Left lung (tissue), 14 donors: ENCODE measurements at regions of chr1 and their contacts with region 1.

Region 1: GRCh38 chr1:52296345-52296744 is 69.7 kb downstream of the CC2D1B start:
- DNase-seq: peak in 2 of 4 donors; percentile 12 to 44
- ATAC-seq: peak; percentile 97
- H3K4me3 ChIP-seq: no peak overlapping the region
- H3K27ac ChIP-seq: no peak overlapping the region
- H3K4me1 ChIP-seq: no peaks in the 10 kb centered on the region
- H3K27me3 ChIP-seq: no peaks in the 10 kb centered on the region
- CTCF ChIP-seq: peak; percentile 53 to 59

Region 2: GRCh38 chr1:51648180-51649109 is 647.9 kb before region 1 on chr1:
- intact Hi-C with region 1: no loop called
- DNase-seq: peak in 2 of 4 donors; percentile 57 to 76
- ATAC-seq: peak; percentile 75
- H3K4me3 ChIP-seq: no peak overlapping the region
- H3K27ac ChIP-seq: peak overlapping the region; percentile 21 to 31
- H3K4me1 ChIP-seq: peaks cover 3 to 34% of the 10 kb centered on the region in 2 donors
- H3K27me3 ChIP-seq: no peaks in the 10 kb centered on the region
- CTCF ChIP-seq: no peak

Region 3: DNA sequence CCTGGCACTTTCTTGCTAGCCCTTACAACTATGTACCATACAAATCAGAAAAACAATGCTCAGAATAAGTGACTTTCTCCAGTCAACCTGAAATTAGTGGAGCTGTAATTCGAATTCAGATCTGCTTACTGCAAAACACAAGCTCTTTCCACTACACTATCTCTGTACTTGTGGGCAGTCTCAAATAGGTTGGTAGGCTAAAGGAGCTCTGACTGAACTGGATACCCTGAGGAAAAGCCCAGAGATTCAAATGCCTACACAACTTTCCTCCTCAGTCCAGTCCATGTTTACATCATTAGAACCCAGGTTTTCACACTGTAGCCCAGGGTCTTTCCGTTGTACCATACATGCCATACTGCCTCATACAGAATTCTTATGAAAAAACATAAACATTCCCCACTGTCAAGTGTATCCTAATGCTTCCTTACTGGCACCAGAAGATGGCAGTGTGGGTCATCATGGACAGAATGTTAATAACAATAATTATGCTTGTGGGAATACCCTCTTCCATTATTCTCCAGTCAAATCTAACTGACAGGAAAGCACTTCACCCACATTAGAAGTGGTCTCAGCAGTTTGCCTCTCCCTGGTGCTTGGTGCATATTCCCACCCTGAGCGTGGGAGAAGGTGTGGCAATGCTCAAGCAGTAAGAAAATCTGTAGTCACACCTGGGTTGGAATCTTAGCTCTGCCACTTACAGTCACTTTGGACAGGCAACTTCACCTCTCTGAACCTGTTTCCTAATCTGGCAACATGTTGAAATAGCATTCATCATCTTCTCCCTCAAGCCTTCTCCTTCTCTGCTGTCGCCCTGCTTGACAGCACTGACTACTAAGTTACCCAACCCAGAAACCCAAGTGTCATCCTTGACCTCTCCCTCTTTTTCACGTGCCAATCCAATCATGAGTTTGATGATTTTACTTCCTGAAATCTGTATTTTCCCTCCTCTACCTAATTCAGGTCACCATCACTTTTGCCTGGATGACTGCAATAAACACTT is 168.9 kb before region 1 on chr1:
- intact Hi-C with region 1: loop called in 1 of 2 experiments (anchors 5 kb)
- DNase-seq: peak in 2 of 4 donors; percentile 43 to 78
- ATAC-seq: peak; percentile 96
- H3K4me3 ChIP-seq: no peak overlapping the region
- H3K27ac ChIP-seq: no peak overlapping the region
- H3K4me1 ChIP-seq: no peaks in the 10 kb centered on the region
- H3K27me3 ChIP-seq: no peaks in the 10 kb centered on the region
- CTCF ChIP-seq: peak; percentile 54 to 63

Region 4: GRCh38 chr1:52180173-52180572 is 116.2 kb before region 1 on chr1:
- intact Hi-C with region 1: no loop called
- DNase-seq: no peak
- ATAC-seq: no peak
- H3K4me3 ChIP-seq: no peak overlapping the region
- H3K27ac ChIP-seq: no peak overlapping the region
- H3K4me1 ChIP-seq: no peaks in the 10 kb centered on the region
- H3K27me3 ChIP-seq: no peaks in the 10 kb centered on the region
- CTCF ChIP-seq: no peak

Region 5: DNA sequence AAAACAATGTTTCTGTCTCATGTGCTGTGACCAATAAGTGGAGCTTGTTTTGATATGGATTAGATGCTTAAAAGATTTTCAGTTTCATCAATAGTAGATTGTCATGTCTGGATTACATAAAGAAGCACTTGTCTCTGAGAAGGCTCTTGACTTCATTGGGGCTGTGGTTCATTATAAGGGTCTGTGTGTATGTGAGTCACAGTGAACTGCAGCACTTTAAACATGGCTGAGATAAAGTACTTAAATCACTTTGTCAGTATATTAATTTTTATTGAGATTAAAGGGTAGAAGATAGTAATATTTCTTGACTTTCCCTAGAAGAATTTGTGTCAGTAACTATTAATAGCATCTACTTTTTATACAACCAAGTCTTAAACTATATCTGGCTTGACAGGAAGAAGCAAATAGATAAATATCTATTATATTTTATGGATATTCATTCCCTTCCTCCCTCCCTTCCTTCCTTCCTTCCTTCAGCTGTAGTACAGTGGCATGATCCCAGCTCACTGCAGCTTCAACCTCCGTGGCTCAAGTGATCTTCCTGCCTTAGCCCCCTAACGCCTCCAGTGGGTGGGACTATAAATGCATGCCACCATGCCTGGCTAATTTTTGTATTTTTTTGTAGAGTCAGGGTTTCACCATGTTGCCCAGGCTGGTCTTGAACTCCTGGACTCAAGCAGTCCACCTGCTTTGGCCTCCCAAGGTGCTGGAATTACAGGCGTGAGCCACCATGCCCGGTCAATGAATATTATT is 105.7 kb before region 1 on chr1:
- intact Hi-C with region 1: no loop called
- DNase-seq: no peak
- ATAC-seq: peak; percentile 54
- H3K4me3 ChIP-seq: no peak overlapping the region
- H3K27ac ChIP-seq: no peak overlapping the region
- H3K4me1 ChIP-seq: no peaks in the 10 kb centered on the region
- H3K27me3 ChIP-seq: no peaks in the 10 kb centered on the region
- CTCF ChIP-seq: no peak